Activated B cell treated with CpG ODN at 0.5 μM for 24 hours (primary cell): ENCODE measurements at regions of chr1 and their contacts with region 1.

Region 1: GRCh38 chr1:109643385-109644230 is 12.3 kb upstream of the GSTM4 start:
- DNase-seq: peak; percentile 81
- ATAC-seq: peak; percentile 90
- H3K4me3 Mint-ChIP-seq: peak overlapping the region; percentile 24
- H3K27ac Mint-ChIP-seq: no peak overlapping the region
- H3K4me1 Mint-ChIP-seq: peaks cover 19% of the 10 kb centered on the region
- H3K27me3 Mint-ChIP-seq: peaks cover 2% of the 10 kb centered on the region
- CTCF ChIP-seq: peak; percentile 95

Region 2: DNA sequence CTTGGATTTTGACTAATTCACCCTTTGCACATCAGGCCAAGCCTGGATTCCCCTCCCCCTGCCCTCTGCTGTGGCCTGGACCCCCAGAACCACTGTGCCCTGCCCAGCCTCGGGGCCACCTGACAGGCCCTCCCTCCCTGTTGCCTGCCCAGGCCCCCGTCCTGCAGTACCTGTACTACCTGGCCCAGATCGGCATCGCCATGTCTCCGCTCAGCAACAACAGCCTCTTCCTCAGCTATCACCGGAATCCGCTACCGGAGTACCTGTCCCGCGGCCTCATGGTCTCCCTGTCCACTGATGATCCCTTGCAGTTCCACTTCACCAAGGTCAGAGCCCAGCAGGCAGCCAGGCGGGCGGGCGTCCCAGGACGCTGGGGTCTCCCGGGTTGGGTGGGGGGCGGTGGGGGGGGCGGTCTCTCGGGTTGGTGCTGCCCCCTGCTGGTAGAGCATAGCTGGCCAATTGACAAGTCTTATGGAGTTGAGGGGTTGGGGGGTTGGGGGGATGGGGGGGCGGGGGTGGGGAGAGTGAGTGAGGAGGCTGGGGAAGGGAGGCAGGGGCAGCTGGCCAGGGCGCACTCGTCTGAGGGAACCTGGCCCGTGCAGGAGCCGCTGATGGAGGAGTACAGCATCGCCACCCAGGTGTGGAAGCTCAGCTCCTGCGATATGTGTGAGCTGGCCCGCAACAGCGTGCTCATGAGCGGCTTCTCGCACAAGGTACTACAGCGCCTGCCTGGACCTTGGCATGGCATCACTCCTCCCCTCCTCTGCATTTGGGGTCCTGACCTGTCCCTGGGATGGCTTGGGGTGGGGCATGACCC is 13.3 kb before region 1 on chr1:
- CTCF ChIA-PET with region 1: interaction called, 25 read pairs
- POLR2A ChIA-PET with region 1: no interaction called
- intact Hi-C with region 1: no loop called
- DNase-seq: no peak
- ATAC-seq: no peak
- H3K4me3 Mint-ChIP-seq: no peak overlapping the region
- H3K27ac Mint-ChIP-seq: no peak overlapping the region
- H3K4me1 Mint-ChIP-seq: peaks cover 16% of the 10 kb centered on the region
- H3K27me3 Mint-ChIP-seq: no peaks in the 10 kb centered on the region
- CTCF ChIP-seq: no peak

Region 3: DNA sequence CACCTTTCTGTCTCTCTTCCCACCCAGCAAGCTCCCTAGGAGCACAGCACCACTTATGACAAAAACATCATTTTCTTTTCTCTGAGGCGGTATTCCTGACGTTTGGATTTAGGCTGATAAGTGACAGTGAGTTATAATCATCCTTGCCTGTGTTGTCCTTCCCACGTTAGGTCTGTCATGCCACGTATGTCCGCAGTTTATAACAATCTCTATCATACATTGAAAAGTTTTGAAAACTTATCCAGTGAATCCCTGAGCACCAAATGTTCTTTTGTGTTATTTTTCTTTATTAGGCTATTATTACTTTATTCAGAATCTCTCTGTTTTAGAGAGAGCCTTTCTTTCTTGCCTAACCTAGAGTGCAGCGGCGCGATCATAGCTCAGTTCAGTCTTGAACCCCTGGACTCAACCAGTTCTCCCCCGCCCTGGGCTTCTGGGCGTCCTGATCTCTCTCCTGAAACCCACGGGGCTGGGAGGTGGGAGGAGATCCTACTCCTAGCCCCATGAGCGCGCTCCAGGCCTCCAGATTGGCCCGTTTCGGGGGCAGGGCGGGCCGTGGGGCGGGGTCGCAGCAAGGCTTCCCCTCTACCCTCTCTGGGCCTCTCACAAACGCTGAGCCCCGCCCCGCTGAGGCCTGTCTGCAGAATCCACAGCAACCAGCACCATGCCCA is 24.0 kb after region 1 on chr1 and contains the start of gene GSTM2:
- CTCF ChIA-PET with region 1: interaction called, 4 read pairs
- POLR2A ChIA-PET with region 1: no interaction called
- intact Hi-C with region 1: loop called (anchors 1 kb)
- DNase-seq: peak; percentile 63
- ATAC-seq: peak; percentile 100
- H3K4me3 Mint-ChIP-seq: peak within 1 kb of the TSS; percentile 80
- H3K27ac Mint-ChIP-seq: no peak within 1 kb of the TSS
- H3K4me1 Mint-ChIP-seq: peaks cover 21% of the 10 kb centered on the region
- H3K27me3 Mint-ChIP-seq: no peaks in the 10 kb centered on the region
- CTCF ChIP-seq: no peak
- total RNA-seq, gene GSTM2: 9.2 and 11.0 TPM in 2 replicates

Region 4: DNA sequence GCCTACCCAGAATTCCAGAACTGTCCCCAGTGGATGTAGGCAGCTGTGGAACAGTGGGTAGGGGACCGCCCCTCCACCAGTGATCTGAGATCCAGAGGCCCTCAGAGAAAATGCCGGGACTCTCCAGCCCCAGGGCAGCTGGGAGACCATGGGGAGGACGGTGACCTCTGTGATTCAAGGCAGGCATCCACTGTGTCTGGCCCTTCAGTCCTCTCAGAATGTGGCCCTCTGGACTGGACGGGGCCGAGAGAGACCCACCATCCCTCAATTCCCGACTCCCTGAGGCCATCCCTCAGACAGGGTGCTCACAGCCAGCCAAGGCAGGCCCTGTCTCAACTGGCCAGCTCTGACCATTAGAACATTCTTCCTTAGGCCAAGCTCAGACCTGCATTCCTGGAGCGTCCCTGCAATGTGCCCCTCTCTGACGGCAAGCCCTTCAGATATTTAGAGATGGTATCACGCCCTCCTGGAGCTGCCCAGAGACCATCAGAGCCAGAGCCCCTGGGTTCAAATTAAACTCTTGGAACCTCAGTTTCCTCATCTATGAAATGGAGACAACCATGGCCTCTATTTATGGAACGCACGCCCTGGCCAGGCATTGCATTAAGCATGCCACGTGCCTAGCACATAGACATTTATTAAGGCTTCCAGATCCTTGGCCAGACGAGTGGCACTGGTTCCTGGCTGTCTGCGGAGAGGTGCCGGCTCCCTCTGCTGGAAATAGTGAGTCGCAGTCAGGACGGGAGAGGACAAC is 129.7 kb after region 1 on chr1:
- CTCF ChIA-PET with region 1: interaction called, 103 read pairs
- POLR2A ChIA-PET with region 1: interaction called, 3 read pairs
- intact Hi-C with region 1: loop called (anchors 1 kb)
- DNase-seq: peak; percentile 37
- ATAC-seq: peak; percentile 81
- H3K4me3 Mint-ChIP-seq: no peak overlapping the region
- H3K27ac Mint-ChIP-seq: no peak overlapping the region
- H3K4me1 Mint-ChIP-seq: peaks cover 3% of the 10 kb centered on the region
- H3K27me3 Mint-ChIP-seq: peaks cover 12% of the 10 kb centered on the region
- CTCF ChIP-seq: no peak

Region 5: GRCh38 chr1:110011527-110012041 is 368.0 kb after region 1 on chr1:
- CTCF ChIA-PET with region 1: interaction called, 12 read pairs
- POLR2A ChIA-PET with region 1: no interaction called
- intact Hi-C with region 1: loop called (anchors 1 kb)
- DNase-seq: no peak
- ATAC-seq: peak; percentile 90
- H3K4me3 Mint-ChIP-seq: peak overlapping the region; percentile 75
- H3K27ac Mint-ChIP-seq: peak overlapping the region; percentile 99
- H3K4me1 Mint-ChIP-seq: peaks cover 37% of the 10 kb centered on the region
- H3K27me3 Mint-ChIP-seq: no peaks in the 10 kb centered on the region
- CTCF ChIP-seq: peak; percentile 55